B cell (primary cell): ENCODE measurements at regions of chr4 and their contacts with region 1.

Region 1: DNA sequence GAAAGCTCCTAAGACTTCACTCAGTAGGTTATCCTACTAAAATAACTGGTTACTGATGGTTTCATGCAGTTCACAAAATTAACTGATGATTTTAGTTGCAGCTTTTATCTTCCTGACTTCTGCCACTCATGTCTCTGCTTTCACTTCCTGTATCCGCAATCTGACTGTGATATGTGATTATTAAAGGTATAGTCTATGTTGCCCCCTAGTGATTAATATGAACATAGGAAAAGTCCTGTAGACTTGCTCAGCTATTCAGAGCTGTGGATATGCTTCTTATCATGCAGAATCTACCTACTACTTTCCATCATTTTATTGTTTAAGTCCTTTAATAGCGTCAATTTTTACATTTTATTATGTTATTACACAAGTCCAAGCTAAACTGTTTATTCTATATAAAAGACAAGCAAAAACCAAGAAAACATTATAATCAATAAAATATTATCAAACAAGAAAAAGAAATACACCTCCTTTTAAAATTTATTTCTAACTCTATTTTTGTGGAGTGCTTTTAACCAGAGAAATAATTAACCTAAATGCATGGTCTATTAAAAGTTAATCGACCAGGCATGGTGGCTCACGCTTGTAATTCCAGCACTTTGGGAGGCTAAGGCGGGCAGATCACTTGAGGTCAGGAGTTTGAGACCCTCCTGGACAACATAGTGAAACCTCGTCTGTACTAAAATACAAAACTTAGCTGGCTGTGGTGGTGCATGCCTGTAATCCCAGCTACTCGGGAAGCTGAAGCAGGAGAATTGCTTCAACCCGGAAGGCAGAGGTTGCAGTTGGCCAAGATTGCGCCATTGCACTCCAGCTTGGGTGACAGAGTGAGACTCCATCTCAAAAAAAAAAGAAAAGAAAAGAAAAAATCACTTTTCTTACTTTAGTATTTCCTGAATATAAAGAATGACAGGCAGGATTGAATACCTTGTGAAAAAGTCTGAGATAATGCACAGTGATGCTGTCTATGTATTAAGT is 40.4 kb upstream of the TLR2 start:
- DNase-seq: peak; percentile 80
- ATAC-seq: peak; percentile 96
- H3K4me3 ChIP-seq: no peak overlapping the region
- H3K4me3 Mint-ChIP-seq: no peak overlapping the region
- H3K27ac ChIP-seq: no peak overlapping the region
- H3K27ac Mint-ChIP-seq: no peak overlapping the region
- H3K4me1 ChIP-seq: no peaks in the 10 kb centered on the region
- H3K4me1 Mint-ChIP-seq: peaks cover 8% of the 10 kb centered on the region
- H3K27me3 ChIP-seq: no peaks in the 10 kb centered on the region
- H3K27me3 Mint-ChIP-seq: no peaks in the 10 kb centered on the region
- CTCF ChIP-seq: peak; percentile 81

Region 2: DNA sequence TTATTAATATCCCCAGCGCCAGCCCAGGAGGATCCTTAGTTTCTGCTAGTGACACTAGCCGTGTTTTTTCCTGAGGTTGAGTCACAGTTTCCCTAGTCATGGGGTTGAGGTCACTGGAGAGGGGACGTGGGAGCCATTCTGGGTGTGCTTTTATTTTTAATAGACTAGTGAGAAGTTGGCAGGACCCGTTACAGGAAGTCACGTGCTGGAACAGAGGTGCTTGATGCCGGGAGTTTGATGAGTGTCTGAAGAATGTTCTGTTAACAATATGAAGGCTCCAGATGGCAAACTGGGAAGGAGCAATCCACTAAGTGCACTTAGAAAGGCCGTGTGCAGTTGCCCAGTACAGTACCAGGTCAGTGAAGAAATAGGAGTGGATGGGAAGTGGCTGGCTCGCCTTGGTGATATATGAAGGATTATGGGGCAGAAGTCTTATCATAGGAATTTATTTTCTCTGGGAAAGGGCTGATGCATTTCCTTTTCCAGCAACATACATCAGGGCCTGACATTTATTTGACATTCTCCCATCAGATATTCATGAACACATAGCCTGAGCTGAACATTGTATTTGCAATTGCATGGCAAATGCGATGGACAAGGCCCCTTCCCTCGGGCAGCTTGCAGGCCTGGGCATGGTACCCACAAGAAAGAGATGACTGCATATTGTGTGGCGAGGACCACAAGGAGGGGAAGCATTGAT is 1399.6 kb before region 1 on chr4:
- CTCF ChIA-PET with region 1: no interaction called
- POLR2A ChIA-PET with region 1: no interaction called
- intact Hi-C with region 1: no loop called
- DNase-seq: no peak
- ATAC-seq: no peak
- H3K4me3 ChIP-seq: no peak overlapping the region
- H3K4me3 Mint-ChIP-seq: no peak overlapping the region
- H3K27ac ChIP-seq: no peak overlapping the region
- H3K27ac Mint-ChIP-seq: no peak overlapping the region
- H3K4me1 ChIP-seq: no peaks in the 10 kb centered on the region
- H3K4me1 Mint-ChIP-seq: no peaks in the 10 kb centered on the region
- H3K27me3 ChIP-seq: peaks cover 0 to 10% (median 1%) of the 10 kb centered on the region in 4 experiments
- H3K27me3 Mint-ChIP-seq: peaks cover 9% of the 10 kb centered on the region
- CTCF ChIP-seq: no peak

Region 3: DNA sequence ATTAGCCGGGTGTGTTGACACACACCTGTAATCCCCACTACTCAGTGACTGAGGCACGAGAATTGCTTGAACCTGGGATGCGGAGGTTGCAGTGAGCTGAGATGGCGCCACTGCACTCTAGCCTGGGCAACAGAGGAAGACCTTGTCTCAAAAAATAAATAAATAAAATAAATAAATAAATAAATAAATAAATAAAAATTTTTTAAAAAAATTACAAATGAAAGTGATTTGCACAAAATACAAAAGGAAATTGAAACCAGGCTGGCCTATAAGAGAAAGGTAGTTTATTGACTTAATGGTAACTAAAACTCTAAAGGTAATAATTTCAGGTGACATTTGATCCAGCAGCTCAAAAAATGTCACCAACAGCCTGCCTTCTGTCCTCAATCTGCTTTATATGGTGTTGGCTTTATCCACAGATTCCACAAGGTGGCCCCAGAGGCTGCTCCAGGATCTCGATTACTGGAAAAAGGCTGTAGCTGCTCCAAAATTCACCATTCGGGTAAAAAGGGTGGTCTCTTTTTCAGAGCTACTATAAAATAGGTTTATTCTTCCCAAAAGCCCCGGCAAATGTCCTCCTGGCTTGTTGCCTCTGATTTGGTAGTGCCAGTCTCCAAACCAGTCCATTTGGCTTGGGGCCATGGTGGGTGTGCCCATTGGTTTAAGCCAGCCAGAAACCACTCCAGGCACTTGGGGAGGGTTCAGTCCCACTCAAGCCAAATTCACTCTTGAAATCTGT is 500.8 kb before region 1 on chr4:
- CTCF ChIA-PET with region 1: interaction called, 12 read pairs
- POLR2A ChIA-PET with region 1: no interaction called
- intact Hi-C with region 1: loop called (anchors 1 kb)
- DNase-seq: peak; percentile 56
- ATAC-seq: no peak
- H3K4me3 ChIP-seq: no peak overlapping the region
- H3K4me3 Mint-ChIP-seq: no peak overlapping the region
- H3K27ac ChIP-seq: no peak overlapping the region
- H3K27ac Mint-ChIP-seq: no peak overlapping the region
- H3K4me1 ChIP-seq: peaks cover 18% of the 10 kb centered on the region in 2 donors
- H3K4me1 Mint-ChIP-seq: peaks cover 10% of the 10 kb centered on the region
- H3K27me3 ChIP-seq: peaks cover 0 to 5% (median 2%) of the 10 kb centered on the region in 4 experiments
- H3K27me3 Mint-ChIP-seq: peaks cover 10% of the 10 kb centered on the region
- CTCF ChIP-seq: peak; percentile 49

Region 4: GRCh38 chr4:153221783-153222706 is 421.6 kb before region 1 on chr4:
- CTCF ChIA-PET with region 1: interaction called, 3 read pairs
- POLR2A ChIA-PET with region 1: interaction called, 6 read pairs
- intact Hi-C with region 1: loop called (anchors 10 kb)
- DNase-seq: peak; percentile 62
- ATAC-seq: peak; percentile 32
- H3K4me3 ChIP-seq: peak overlapping the region; percentile 2 to 84 (median 67)
- H3K4me3 Mint-ChIP-seq: peak overlapping the region; percentile 92
- H3K27ac ChIP-seq: peak overlapping the region in 1 of 2 donors; percentile 48
- H3K27ac Mint-ChIP-seq: peak overlapping the region; percentile 67
- H3K4me1 ChIP-seq: peaks cover 11 to 18% of the 10 kb centered on the region in 2 donors
- H3K4me1 Mint-ChIP-seq: peaks cover 35% of the 10 kb centered on the region
- H3K27me3 ChIP-seq: peaks cover 0 to 3% (median 0%) of the 10 kb centered on the region in 4 experiments
- H3K27me3 Mint-ChIP-seq: no peaks in the 10 kb centered on the region
- CTCF ChIP-seq: no peak

Region 5: DNA sequence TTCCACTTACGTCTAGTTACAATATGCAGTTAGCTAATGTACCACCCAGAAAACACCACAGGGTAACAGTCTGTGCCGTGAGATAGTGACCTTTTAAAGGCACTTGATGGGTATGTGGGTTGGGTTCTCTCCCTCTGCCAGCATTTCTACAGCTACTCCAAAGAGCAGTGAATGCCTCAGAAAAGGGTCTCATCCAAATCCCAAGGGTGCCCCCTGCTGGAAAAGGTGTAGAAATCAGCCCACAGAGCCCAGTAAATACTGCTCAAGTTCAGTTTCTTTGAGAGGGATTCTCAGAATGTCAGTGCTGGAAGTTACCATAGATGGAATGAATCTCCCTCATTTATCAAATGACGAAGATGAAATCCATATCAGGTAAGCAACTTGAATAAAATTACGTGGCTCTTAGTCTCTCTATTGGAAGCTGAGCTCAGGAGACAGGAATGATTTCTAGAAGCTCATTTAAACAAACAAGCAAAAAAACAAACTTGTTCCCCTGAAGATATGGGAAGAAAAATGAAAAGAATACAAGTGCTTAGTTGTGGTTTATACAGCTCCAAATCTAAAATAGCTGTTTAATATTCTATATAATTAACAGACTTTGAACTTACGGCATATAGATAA is 106.6 kb after region 1 on chr4:
- CTCF ChIA-PET with region 1: interaction called, 41 read pairs
- POLR2A ChIA-PET with region 1: no interaction called
- intact Hi-C with region 1: loop called (anchors 1 kb)
- DNase-seq: peak; percentile 75
- ATAC-seq: peak; percentile 68
- H3K4me3 ChIP-seq: no peak overlapping the region
- H3K4me3 Mint-ChIP-seq: no peak overlapping the region
- H3K27ac ChIP-seq: no peak overlapping the region
- H3K27ac Mint-ChIP-seq: no peak overlapping the region
- H3K4me1 ChIP-seq: peaks cover 0 to 10% of the 10 kb centered on the region in 2 donors
- H3K4me1 Mint-ChIP-seq: no peaks in the 10 kb centered on the region
- H3K27me3 ChIP-seq: peaks cover 0 to 10% (median 3%) of the 10 kb centered on the region in 4 experiments
- H3K27me3 Mint-ChIP-seq: peaks cover 9% of the 10 kb centered on the region
- CTCF ChIP-seq: peak; percentile 87